ENCODE measurements at regions of chr11 and their contacts with region 1.

Region 1: GRCh38 chr11:63768237-63769043 is at the start of gene ZFTA:
- H3K4me3 Mint-ChIP-seq: peak within 1 kb of the TSS; percentile 93
- H3K27ac Mint-ChIP-seq: peak within 1 kb of the TSS; percentile 76
- H3K4me1 Mint-ChIP-seq: peaks cover 34% of the 10 kb centered on the region
- H3K27me3 Mint-ChIP-seq: peaks cover 39% of the 10 kb centered on the region

Region 2: GRCh38 chr11:63945477-63946163 is 177.2 kb after region 1 on chr11:
- intact Hi-C with region 1: loop called (anchors 2 kb)
- H3K4me3 Mint-ChIP-seq: no peak overlapping the region
- H3K27ac Mint-ChIP-seq: no peak overlapping the region
- H3K4me1 Mint-ChIP-seq: peaks cover 34% of the 10 kb centered on the region
- H3K27me3 Mint-ChIP-seq: no peaks in the 10 kb centered on the region

Region 3: GRCh38 chr11:64141081-64141783 is 372.8 kb after region 1 on chr11:
- intact Hi-C with region 1: loop called (anchors 5 kb)
- H3K4me3 Mint-ChIP-seq: no peak overlapping the region
- H3K27ac Mint-ChIP-seq: no peak overlapping the region
- H3K4me1 Mint-ChIP-seq: peaks cover 42% of the 10 kb centered on the region
- H3K27me3 Mint-ChIP-seq: peaks cover 3% of the 10 kb centered on the region